H1 (cell line): ENCODE measurements at regions of chr14 and their contacts with region 1.

Region 1: GRCh38 chr14:55254581-55254980 is 16.6 kb upstream of the FBXO34 start:
- DNase-seq: no peak
- H3K4me3 ChIP-seq: no peak overlapping the region
- H3K27ac ChIP-seq: no peak overlapping the region
- H3K4me1 ChIP-seq: no peaks in the 10 kb centered on the region
- H3K27me3 ChIP-seq: no peaks in the 10 kb centered on the region
- CTCF ChIP-seq: no peak
- EP300 ChIP-seq: no peak
- POLR2A ChIP-seq: no peak
- RAD21 ChIP-seq: no peak

Region 2: DNA sequence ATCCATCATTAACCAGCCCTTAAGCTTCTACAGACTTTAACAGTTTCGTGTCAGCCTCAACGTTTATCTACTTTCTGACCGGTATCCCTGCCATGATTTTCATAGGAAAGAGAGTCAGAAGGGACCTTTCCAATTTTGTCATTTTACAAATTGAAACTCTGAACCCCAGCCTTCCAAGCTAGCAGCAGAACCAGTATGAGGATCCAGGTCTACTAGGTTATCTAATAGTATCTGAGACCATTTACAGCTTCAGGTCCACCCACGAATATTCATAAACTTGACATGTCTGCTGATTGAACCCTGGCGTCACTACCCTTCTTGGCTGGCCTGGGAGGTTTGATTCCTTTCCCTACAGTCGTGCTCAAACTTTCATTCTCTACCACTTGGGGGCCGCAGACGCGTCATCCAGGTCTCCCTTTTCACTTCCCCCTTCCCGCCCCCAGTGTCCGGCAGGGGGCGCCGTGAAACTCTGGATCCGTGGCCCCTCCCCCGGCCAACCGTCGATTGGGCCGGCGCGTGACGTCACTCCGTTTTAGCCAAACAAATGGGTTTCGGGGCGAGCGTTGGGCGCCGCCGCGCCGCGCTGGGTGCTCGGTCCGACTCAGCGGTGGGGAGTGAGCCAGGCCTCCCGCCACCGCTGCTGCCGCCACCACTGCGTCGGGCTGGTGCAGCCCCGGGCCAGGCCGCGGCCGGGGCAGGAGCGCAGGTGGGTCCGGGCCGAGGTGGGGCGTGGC is 16.4 kb after region 1 on chr14 and contains the start of gene FBXO34:
- CTCF ChIA-PET with region 1: interaction called, 46 read pairs
- POLR2A ChIA-PET with region 1: interaction called, 3 read pairs
- DNase-seq: peak; percentile 85 to 100
- H3K4me3 ChIP-seq: peak within 1 kb of the TSS; percentile 82 to 100 (median 87)
- H3K27ac ChIP-seq: peak within 1 kb of the TSS; percentile 88; the same call in 1 of the 2 replicates
- H3K4me1 ChIP-seq: peaks cover 0 to 1% (median 0%) of the 10 kb centered on the region in 4 experiments; a peak in 1 of 7 replicates
- H3K27me3 ChIP-seq: peaks cover 0 to 1% (median 0%) of the 10 kb centered on the region in 4 experiments; a peak in 1 of 7 replicates
- CTCF ChIP-seq: peak; percentile 92 to 99 (median 97)
- EP300 ChIP-seq: peak in 1 of 2 experiments; percentile 81; a peak in 1 of 3 replicates
- POLR2A ChIP-seq: peak in 1 of 2 experiments; percentile 82; a peak in 2 of 3 replicates
- RAD21 ChIP-seq: peak; percentile 72 to 74
- total RNA-seq, gene FBXO34: 14.4 and 14.8 TPM in 2 replicates